CD8-positive, alpha-beta T cell (primary cell): ENCODE measurements at regions of chr2 and their contacts with region 1.

Region 1: GRCh38 chr2:138192096-138192495 is 227.8 kb downstream of the HNMT start:
- DNase-seq: no peak
- ATAC-seq: no peak
- H3K4me3 ChIP-seq: no peak overlapping the region
- H3K4me3 Mint-ChIP-seq: no peak overlapping the region
- H3K27ac ChIP-seq: no peak overlapping the region
- H3K27ac Mint-ChIP-seq: no peak overlapping the region
- H3K4me1 ChIP-seq: no peaks in the 10 kb centered on the region
- H3K4me1 Mint-ChIP-seq: no peaks in the 10 kb centered on the region
- H3K27me3 ChIP-seq: no peaks in the 10 kb centered on the region
- H3K27me3 Mint-ChIP-seq: no peaks in the 10 kb centered on the region
- CTCF ChIP-seq: no peak

Region 2: GRCh38 chr2:137435184-137435583 is 756.9 kb before region 1 on chr2:
- CTCF ChIA-PET with region 1: no interaction called
- POLR2A ChIA-PET with region 1: no interaction called
- intact Hi-C with region 1: no loop called
- DNase-seq: no peak
- ATAC-seq: no peak
- H3K4me3 ChIP-seq: no peak overlapping the region
- H3K4me3 Mint-ChIP-seq: no peak overlapping the region
- H3K27ac ChIP-seq: no peak overlapping the region
- H3K27ac Mint-ChIP-seq: no peak overlapping the region
- H3K4me1 ChIP-seq: no peaks in the 10 kb centered on the region
- H3K4me1 Mint-ChIP-seq: no peaks in the 10 kb centered on the region
- H3K27me3 ChIP-seq: no peaks in the 10 kb centered on the region
- H3K27me3 Mint-ChIP-seq: no peaks in the 10 kb centered on the region
- CTCF ChIP-seq: no peak

Region 3: GRCh38 chr2:137654046-137654445 is 538.0 kb before region 1 on chr2:
- CTCF ChIA-PET with region 1: no interaction called
- POLR2A ChIA-PET with region 1: no interaction called
- intact Hi-C with region 1: loop called in 1 of 2 experiments (anchors 5 kb)
- DNase-seq: no peak
- ATAC-seq: no peak
- H3K4me3 ChIP-seq: no peak overlapping the region
- H3K4me3 Mint-ChIP-seq: no peak overlapping the region
- H3K27ac ChIP-seq: no peak overlapping the region
- H3K27ac Mint-ChIP-seq: no peak overlapping the region
- H3K4me1 ChIP-seq: no peaks in the 10 kb centered on the region
- H3K4me1 Mint-ChIP-seq: no peaks in the 10 kb centered on the region
- H3K27me3 ChIP-seq: no peaks in the 10 kb centered on the region
- H3K27me3 Mint-ChIP-seq: no peaks in the 10 kb centered on the region
- CTCF ChIP-seq: no peak